Gastrocnemius medialis (tissue), 4 donors: ENCODE measurements at regions of chr21 and their contacts with region 1.

Region 1: GRCh38 chr21:33360881-33361602 is 36.3 kb downstream of the IFNAR1 start:
- DNase-seq: peak; percentile 27 to 66
- ATAC-seq: peak; percentile 82 to 95
- H3K4me3 ChIP-seq: peak overlapping the region; percentile 5 to 48 (median 26)
- H3K27ac ChIP-seq: peak overlapping the region; percentile 7 to 51 (median 30)
- H3K4me1 ChIP-seq: peaks cover 14 to 20% of the 10 kb centered on the region in 2 donors
- H3K27me3 ChIP-seq: no peaks in the 10 kb centered on the region
- CTCF ChIP-seq: peak; percentile 75 to 88 (median 84)
- POLR2A ChIP-seq: no peak

Region 2: GRCh38 chr21:33374450-33375096 is 13.5 kb after region 1 on chr21:
- in situ Hi-C with region 1: no loop called
- intact Hi-C with region 1: loop called (anchors 2 kb)
- DNase-seq: no peak
- ATAC-seq: peak in 1 of 2 donors; percentile 30
- H3K4me3 ChIP-seq: no peak overlapping the region
- H3K27ac ChIP-seq: no peak overlapping the region
- H3K4me1 ChIP-seq: peaks cover 6 to 14% of the 10 kb centered on the region in 2 donors
- H3K27me3 ChIP-seq: no peaks in the 10 kb centered on the region
- CTCF ChIP-seq: peak in 4 of 5 experiments; percentile 19 to 62 (median 42)
- POLR2A ChIP-seq: no peak

Region 3: GRCh38 chr21:33441489-33442477 is 80.7 kb after region 1 on chr21:
- in situ Hi-C with region 1: loop called in 1 of 4 experiments (anchors 10 kb)
- intact Hi-C with region 1: loop called (anchors 1 kb)
- DNase-seq: peak in 1 of 2 donors; percentile 41
- ATAC-seq: peak in 1 of 2 donors; percentile 34
- H3K4me3 ChIP-seq: no peak overlapping the region
- H3K27ac ChIP-seq: peak overlapping the region in 2 of 4 donors; percentile 29 to 34
- H3K4me1 ChIP-seq: peaks cover 0 to 3% of the 10 kb centered on the region in 2 donors
- H3K27me3 ChIP-seq: no peaks in the 10 kb centered on the region
- CTCF ChIP-seq: no peak
- POLR2A ChIP-seq: no peak